HEK293 (cell line): ENCODE measurements at regions of chr7 and their contacts with region 1.

Region 1: DNA sequence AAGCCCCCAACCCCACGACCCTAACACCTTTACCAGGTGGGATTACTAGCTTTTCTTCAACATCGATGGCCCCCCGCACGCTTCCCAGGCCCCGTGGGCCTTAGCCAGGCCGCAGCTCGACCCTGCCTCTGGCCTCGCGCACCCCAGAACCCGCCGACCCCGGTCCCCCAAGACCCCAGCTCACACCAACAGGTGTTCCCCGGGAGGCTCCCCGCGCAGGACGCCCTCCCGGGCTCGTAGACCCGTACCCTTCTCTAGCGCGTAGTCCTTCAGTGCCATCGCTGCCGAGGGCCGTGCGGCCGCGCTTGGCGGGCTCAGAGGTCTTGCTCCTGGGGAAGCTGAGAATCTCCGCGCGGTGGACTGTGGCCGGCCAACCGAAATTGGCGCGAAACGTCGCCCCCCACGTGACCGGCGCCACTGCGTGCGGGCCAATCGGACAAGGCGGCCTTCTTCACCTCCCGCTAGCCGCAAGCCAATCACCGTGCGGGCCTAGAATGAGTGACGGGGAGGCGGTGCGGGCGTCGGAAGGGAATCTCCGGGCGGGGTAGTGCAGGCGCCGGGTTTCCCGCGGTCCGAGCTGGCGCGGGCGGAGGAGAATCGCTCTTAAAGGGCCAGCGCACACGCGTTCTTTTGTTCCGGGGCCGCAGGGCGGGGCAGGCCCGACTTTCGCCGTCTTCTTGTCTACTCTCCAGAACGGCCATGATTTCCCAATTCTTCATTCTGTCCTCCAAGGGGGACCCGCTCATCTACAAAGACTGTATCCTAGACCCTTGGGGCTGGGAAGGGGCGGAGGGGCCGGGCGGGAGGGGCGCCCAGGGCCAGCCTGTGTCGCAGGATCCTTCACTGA is at the starts of genes AP4M1 and MCM7:
- H3K4me3 ChIP-seq: peak within 1 kb of the TSS; percentile 95
- H3K27ac ChIP-seq: peak within 1 kb of the TSS; percentile 99
- H3K4me1 ChIP-seq: no peaks in the 10 kb centered on the region
- CTCF ChIP-seq: 0 out of 2 replicates have a peak, but pooled peaks have one; percentile 5

Region 2: DNA sequence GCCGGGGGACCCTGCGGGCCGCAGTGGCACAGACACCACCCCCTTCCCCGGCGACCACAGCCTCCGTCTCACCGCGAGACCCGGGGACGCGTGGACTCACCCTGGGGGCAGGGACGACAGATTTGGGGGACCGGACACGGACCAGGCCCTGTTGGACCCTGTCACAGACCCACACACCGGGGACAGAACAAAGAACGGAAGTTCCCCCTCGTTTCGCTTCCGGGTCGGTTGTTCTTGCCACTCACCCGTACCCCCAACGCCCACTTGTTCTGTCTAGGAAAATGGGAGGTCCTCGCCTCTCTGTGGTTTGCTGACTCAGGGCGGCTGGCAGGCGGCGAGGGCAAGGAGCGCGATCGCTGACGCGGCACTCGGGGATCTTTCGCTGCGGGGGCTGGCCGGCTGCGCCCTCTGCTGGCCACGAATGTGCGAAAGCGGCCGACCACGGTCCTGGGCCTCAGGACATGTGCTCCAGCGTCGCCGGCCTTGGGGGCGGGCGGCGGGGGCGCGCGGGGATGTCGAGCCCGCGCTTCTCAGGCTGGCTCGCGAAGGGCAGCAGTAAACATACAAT is 19.6 kb before region 1 on chr7 and contains the start of gene ZNF3:
- CTCF ChIA-PET with region 1: interaction called, 8 read pairs
- POLR2A ChIA-PET with region 1: interaction called, 115 read pairs
- H3K4me3 ChIP-seq: peak within 1 kb of the TSS; percentile 100
- H3K27ac ChIP-seq: peak within 1 kb of the TSS; percentile 37; the same call in 1 of the 2 replicates
- H3K4me1 ChIP-seq: no peaks in the 10 kb centered on the region
- CTCF ChIP-seq: peak; percentile 98

Region 3: DNA sequence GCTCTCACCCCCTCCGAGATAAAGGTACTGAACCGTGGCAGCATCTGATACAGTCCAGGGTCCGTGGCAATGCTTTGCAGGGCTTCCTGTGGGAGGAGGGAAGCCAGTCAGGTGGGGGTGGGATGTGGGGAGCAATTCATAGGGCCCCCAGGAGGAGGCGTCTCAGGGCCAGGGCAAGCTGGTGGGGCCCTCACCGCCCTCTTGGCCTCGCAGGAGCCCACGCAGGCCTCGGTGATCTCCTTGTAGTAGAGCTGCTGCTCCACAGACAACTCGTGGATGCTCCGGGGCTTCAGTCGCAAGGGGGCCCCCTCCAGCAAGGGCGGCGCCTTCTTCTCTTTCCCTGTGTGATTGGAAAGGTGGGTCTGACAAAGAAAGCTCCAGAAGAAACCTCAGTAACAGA is 10.7 kb after region 1 on chr7:
- CTCF ChIA-PET with region 1: no interaction called
- POLR2A ChIA-PET with region 1: interaction called, 39 read pairs
- H3K4me3 ChIP-seq: no peak overlapping the region
- H3K27ac ChIP-seq: no peak overlapping the region
- H3K4me1 ChIP-seq: no peaks in the 10 kb centered on the region
- CTCF ChIP-seq: no peak

Region 4: DNA sequence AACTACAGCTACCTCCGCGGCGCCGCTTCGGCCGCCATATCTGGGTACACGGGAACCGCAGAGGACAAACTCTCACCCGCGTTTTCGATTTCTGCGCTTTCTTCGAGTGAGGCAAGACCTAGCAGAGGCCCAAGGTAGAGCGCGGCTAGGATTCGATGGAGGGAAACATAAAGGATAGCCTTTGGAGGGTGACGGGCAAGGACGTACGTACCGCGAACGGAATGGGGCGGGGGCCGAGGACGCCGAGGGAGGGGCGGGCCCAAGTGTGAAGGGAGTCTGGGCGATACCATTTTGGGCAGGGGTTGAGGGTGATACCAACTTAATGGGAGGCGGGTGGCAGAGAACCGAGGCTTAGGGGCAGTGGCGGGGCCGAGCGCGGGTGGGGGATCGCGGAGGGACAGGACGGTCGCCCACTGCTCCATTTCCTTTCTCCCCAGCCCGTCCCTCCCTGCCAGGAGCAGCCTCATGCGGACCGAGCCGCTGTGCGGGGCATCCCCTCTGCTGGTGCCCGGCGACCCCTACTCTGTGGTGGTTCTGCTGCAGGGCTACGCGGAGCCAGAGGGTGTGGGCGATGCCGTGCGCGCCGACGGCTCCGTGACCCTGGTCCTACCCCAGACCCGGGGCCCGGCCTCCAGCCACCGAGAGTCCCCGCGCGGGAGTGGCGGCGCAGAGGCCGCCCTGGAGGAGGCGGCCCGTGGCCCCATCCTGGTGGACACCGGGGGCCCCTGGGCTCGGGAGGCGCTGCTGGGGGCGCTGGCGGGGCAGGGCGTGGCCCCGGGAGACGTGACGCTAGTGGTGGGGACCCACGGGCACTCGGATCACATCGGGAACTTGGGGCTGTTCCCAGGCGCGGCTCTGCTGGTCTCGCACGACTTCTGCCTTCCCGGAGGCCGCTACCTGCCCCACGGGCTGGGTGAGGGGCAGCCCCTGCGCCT is 26.0 kb after region 1 on chr7 and contains the start of gene MBLAC1:
- CTCF ChIA-PET with region 1: interaction called, 10 read pairs
- POLR2A ChIA-PET with region 1: interaction called, 81 read pairs
- H3K4me3 ChIP-seq: peak within 1 kb of the TSS; percentile 79
- H3K27ac ChIP-seq: peak within 1 kb of the TSS; percentile 98
- H3K4me1 ChIP-seq: no peaks in the 10 kb centered on the region; the same call in 1 of the 2 replicates
- CTCF ChIP-seq: no peak; the same call in 1 of the 2 replicates

Region 5: DNA sequence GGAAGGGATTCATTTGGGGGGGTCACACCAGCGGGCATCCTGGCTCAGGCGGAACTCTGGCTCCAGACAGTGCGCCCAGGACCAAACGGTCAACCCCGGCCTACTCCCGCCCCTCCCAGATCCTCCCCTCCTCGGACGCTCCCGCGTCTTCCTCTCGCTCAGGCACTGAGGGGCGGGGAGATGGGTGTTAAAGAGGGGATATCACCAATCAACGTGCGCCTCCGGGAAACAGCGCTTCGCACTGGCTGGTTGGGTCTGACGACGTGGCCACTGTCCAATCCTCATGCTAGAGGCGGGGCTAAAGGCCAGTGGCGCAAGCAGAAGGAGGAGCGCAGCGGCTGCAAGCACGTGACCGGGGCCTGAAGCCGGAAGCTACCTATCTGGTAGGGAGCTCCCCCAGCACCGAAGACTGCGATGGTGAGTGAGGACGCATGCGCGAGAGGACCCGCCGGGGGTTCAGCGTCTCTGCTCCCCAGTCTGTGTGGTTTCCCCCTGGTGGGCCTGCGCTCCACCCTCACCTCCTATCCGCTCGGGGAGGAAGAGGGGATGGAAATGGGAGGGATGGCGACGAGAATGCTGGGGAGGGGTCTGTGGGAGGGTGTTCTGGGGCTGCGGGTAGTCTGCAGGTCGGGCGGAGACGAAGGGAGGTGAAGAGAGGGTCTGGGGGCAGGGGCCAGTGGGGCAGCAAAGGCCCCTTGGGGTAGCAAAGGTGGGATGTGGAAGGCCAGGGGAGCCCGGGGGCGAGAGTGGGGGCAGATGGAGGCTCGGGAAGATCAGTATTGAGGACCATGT is 47.5 kb after region 1 on chr7 and contains the start of gene LAMTOR4:
- CTCF ChIA-PET with region 1: no interaction called
- POLR2A ChIA-PET with region 1: interaction called, 26 read pairs
- H3K4me3 ChIP-seq: peak within 1 kb of the TSS; percentile 74
- H3K27ac ChIP-seq: peak within 1 kb of the TSS; percentile 68
- H3K4me1 ChIP-seq: peaks cover 10% of the 10 kb centered on the region
- CTCF ChIP-seq: no peak; the same call in 1 of the 2 replicates

Region 6: DNA sequence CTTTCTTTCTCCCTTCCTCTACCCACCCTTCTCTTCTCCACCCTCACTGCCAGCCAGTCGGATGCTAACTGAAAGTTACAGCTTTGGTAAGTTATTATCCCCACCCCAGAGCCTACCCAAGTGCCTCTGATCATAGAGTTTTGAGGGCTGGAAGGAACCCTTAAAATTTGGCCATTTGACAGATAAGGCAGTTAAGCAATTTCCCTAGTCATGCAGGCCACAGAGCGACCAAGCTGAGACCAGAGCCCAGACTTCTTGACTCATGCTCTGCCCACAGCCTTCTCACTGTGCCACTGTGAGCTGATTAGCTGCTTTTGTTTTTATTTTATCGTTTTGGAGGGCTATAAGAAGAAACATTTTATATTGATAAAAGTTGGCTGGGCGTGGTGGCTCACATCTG is 455.3 kb after region 1 on chr7:
- CTCF ChIA-PET with region 1: no interaction called
- POLR2A ChIA-PET with region 1: interaction called, 10 read pairs
- H3K4me3 ChIP-seq: no peak overlapping the region
- H3K27ac ChIP-seq: no peak overlapping the region
- H3K4me1 ChIP-seq: no peaks in the 10 kb centered on the region
- CTCF ChIP-seq: no peak

Region 7: DNA sequence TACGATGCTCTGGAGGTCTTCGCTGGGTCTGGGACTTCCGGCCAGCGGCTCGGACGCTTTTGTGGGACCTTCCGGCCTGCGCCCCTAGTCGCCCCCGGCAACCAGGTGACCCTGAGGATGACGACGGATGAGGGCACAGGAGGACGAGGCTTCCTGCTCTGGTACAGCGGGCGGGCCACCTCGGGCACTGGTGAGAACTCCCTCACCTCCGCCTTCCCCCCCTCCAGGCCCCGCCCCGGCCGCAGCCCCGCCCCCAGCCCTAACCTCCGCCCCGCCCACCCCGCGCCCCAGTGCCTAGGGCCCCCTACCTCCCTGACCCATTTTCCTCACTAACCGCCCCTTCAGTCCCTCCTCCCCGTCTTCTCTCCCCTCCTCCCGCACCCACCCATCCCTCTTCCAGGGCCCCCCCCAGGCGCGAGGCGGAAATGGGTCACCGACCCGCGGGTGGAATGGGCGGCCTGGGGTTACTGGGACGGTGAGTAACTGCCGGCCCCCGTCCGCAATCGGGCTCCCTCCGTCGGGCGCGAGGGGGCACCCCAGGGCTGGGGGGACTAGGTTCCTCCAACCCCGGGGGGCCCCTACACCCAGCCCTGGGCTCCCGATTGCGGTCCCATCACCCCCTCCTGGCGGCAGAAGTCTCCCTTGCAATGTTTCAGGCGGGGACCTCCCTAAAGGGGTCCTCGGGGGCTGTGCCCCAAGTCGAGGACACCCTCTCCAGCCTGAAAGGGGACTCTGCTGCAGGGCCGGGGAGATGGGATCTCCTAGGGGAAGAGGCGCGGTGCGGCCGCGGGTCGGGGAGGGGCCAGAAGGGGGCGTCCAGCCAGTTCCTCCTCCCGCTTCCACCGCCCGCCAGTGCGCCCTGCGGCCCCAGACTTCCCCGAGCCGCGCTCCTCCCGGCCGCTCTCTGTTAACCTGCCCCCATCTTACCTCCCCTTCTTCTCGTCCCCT is 503.1 kb after region 1 on chr7:
- CTCF ChIA-PET with region 1: no interaction called
- POLR2A ChIA-PET with region 1: no interaction called
- H3K4me3 ChIP-seq: peak overlapping the region; percentile 48
- H3K27ac ChIP-seq: peak overlapping the region; percentile 55; the same call in 1 of the 2 replicates
- H3K4me1 ChIP-seq: peaks cover 17% of the 10 kb centered on the region
- CTCF ChIP-seq: peak; percentile 97